HepG2 (cell line): ENCODE measurements at regions of chr19 and their contacts with region 1.

Region 1: DNA sequence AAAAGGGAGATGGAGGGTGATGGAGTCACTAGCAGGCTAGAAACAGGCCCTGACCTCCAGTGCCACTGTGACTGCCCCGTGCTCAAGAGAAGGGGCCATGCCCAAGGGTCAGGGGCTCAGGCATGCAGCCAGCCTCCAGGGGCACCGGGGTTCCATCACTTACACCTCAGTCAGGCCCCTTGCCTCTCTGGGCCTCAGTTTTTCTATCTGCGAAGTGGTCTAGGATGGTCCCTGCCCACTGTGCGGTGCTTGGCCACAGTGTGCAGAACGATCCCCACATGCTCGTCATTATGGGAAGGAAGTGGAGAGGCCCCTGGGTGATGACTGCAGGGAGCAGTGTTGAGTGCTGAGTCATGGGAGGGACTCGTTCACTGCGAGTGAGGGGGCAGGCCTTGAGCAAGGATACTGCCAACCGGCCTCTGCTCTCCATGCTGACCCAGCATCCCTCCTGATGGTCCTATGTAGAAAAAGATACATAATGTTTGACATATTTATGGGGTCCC is 23.1 kb downstream of the TMED1 start:
- DNase-seq: no peak
- ATAC-seq: no peak
- H3K4me3 ChIP-seq: no peak overlapping the region
- H3K27ac ChIP-seq: no peak overlapping the region
- H3K4me1 ChIP-seq: peaks cover 22% of the 10 kb centered on the region
- H3K27me3 ChIP-seq: no peaks in the 10 kb centered on the region
- CTCF ChIP-seq: no peak
- EP300 ChIP-seq: no peak
- POLR2A ChIP-seq: no peak
- RAD21 ChIP-seq: no peak

Region 2: GRCh38 chr19:10769533-10770491 is 43.1 kb before region 1 on chr19:
- CTCF ChIA-PET with region 1: no interaction called
- POLR2A ChIA-PET with region 1: no interaction called
- in situ Hi-C with region 1: no loop called
- intact Hi-C with region 1: loop called (anchors 5 kb)
- DNase-seq: peak; percentile 76
- ATAC-seq: peak; percentile 92
- H3K4me3 ChIP-seq: peak overlapping the region in 1 of 3 experiments; percentile 21; a peak in 1 of 6 replicates
- H3K27ac ChIP-seq: peak overlapping the region; percentile 67
- H3K4me1 ChIP-seq: peaks cover 60% of the 10 kb centered on the region
- H3K27me3 ChIP-seq: no peaks in the 10 kb centered on the region
- CTCF ChIP-seq: peak; percentile 80
- EP300 ChIP-seq: 0 out of 4 replicates have a peak, but pooled peaks of 1 of the 2 experiments have one; percentile 33
- POLR2A ChIP-seq: 0 out of 4 replicates have a peak, but pooled peaks of 1 of the 2 experiments have one; percentile 23
- RAD21 ChIP-seq: peak; percentile 65

Region 3: DNA sequence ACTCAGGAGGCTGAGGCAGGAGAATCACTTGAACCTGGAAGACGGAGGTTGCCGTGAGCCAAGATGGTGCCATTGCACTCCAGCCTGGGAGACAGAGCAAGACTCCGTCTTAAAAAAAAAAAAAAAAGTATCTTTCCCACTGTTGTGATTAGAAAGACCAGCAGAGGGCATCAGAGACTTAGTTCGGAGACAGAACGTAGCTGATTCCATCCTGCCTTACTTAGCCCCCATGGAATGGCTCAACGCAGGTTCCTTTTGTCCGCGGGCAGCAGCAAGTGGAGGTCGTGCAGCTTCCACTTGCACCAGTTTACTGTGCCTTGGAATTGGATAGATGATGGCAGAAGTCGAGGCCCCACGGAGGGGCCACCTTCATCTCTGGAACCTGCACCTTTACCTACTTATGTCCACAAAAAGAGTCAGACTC is 123.7 kb after region 1 on chr19:
- CTCF ChIA-PET with region 1: no interaction called
- POLR2A ChIA-PET with region 1: no interaction called
- in situ Hi-C with region 1: no loop called
- intact Hi-C with region 1: no loop called
- DNase-seq: peak; percentile 76
- ATAC-seq: peak; percentile 77
- H3K4me3 ChIP-seq: peak overlapping the region; percentile 7 to 39 (median 22); a peak in 2 of 6 replicates
- H3K27ac ChIP-seq: peak overlapping the region; percentile 17
- H3K4me1 ChIP-seq: peaks cover 57% of the 10 kb centered on the region
- H3K27me3 ChIP-seq: no peaks in the 10 kb centered on the region
- CTCF ChIP-seq: peak; percentile 87
- EP300 ChIP-seq: no peak
- POLR2A ChIP-seq: no peak
- RAD21 ChIP-seq: peak; percentile 81